ENCODE measurements at regions of chr16 and their contacts with region 1.

Region 1: GRCh38 chr16:66474750-66475199 is 47.7 kb downstream of the BEAN1 start:
- DNase-seq: no peak
- H3K4me3 ChIP-seq: no peak overlapping the region
- H3K27me3 ChIP-seq: peaks cover 8% of the 10 kb centered on the region; the same call in 1 of the 2 replicates
- CTCF ChIP-seq: no peak

Region 2: DNA sequence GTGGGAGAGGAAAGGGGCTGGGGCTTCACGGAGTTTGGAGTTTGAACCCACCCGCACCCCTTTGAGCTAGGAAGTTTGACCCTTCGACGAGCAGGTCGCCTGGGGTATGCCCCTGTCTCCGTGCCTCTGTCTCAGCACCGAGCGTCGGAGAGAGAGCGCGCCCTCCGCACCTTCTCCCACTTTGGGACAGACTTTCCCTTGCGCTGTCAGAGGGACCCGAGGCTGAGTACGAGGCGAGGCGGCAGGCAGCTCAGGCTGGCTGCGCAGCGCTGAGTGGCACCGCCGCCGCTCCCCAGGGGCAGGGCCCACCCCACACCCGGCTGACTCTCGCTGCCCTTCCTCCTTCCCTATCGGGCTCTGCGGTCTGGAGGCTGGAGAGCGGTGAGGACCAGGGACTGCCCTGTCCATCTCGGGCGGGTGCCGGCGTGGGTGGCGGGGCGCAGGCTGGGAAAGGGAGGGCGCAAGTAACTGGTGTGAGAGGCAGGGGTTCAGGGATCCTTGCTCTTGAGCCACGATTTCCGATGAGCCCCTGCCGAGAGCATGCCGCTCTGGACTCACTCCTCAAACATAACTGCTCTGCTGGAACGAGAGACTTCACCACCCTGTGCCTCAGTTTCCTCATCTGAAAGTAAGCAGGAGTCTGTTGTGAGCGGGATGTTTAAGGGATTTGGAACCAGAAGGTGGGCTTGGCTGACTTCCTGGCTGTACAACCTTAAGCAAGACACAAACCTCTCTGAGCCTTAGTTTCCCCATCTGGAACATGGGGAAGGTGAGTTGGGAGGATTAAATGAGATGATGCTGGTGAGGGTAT is 46.7 kb before region 1 on chr16:
- CTCF ChIA-PET with region 1: no interaction called
- POLR2A ChIA-PET with region 1: no interaction called
- DNase-seq: no peak
- H3K4me3 ChIP-seq: no peak overlapping the region
- H3K27me3 ChIP-seq: peaks cover 57% of the 10 kb centered on the region
- CTCF ChIP-seq: no peak

Region 3: DNA sequence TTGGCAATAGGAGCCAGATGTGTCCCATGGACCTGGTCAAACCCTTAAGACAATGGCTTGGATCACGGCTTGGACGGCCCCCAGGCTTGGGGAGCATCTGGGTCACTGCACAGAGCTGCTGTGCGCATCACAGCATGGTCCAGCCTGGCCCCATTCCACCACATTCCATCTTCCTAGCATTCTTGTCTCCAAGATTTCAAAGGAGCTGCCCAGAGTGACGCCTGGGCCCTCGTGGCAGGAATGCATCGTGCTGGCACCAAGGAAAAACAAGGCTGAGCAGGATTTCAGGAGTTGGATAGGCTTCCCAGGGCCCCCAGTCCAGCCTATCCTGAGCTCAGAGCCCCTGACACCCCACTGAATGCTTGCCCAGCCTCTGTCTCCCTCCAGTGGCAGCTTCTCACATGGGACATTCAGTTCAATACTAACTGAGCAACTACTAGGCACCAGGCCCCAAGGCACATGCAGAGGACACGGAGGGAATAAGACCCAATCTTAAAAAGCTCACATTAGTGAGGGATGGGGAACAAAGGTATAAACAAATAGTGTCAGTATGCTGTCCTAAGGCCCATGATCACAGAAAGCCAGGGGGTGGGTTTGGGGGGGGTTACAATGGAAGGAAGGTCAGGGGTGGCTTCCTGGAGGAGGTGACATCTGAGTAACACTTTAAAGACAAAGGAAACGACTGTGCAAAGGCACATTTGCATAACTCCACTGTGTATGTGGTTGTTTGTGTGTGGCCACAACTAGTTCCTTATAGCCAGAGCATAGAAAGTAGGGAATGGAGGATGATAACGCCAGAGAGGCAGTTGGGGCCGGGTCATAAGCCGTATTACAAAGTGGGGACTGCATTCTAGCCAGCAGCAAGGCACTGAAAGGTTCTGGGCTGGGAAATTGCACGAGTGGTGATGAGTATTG is 41.1 kb after region 1 on chr16:
- CTCF ChIA-PET with region 1: interaction called, 12 read pairs
- POLR2A ChIA-PET with region 1: no interaction called
- DNase-seq: no peak
- H3K4me3 ChIP-seq: no peak overlapping the region
- H3K27me3 ChIP-seq: no peaks in the 10 kb centered on the region
- CTCF ChIP-seq: peak; percentile 61